Spleen (tissue), 13 donors: ENCODE measurements at regions of chr19 and their contacts with region 1.

Region 1: DNA sequence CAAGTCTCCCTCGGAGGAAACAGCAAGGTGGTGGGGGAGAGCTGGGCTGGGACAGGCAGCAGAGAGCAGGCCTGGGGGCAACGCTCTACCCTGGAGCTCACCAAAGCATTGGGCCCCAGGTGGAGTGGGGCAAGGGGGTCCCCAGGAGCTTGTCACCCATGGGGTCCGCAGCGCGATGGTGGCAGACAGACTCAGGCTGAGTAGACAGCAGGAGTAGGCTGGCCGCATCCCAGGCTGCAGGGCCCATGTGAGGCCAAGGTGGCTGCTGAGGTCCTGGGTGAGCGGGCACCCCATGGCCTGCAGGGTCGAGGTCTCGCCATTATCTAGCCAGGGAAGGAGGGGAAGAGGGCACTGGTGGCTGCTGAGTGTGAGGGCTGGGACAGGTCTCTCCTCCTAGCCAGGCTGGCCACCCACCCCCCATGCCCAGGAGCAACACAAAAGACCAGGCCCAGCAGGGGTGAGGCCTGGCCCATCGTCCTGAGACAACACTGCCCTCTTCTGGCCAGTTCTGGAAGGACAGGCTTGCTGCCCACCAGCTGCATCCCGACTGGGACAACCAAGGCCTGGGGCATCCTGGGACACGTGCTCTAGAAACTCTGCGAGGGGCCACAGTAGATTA is 33.1 kb downstream of the CEBPG start:
- DNase-seq: peak; percentile 91
- H3K4me3 ChIP-seq: no peak overlapping the region
- H3K27ac ChIP-seq: no peak overlapping the region
- H3K4me1 ChIP-seq: peaks cover 0 to 6% (median 0%) of the 10 kb centered on the region in 6 donors
- H3K27me3 ChIP-seq: no peaks in the 10 kb centered on the region
- CTCF ChIP-seq: peak; percentile 92 to 99 (median 97)
- POLR2A ChIP-seq: no peak

Region 2: DNA sequence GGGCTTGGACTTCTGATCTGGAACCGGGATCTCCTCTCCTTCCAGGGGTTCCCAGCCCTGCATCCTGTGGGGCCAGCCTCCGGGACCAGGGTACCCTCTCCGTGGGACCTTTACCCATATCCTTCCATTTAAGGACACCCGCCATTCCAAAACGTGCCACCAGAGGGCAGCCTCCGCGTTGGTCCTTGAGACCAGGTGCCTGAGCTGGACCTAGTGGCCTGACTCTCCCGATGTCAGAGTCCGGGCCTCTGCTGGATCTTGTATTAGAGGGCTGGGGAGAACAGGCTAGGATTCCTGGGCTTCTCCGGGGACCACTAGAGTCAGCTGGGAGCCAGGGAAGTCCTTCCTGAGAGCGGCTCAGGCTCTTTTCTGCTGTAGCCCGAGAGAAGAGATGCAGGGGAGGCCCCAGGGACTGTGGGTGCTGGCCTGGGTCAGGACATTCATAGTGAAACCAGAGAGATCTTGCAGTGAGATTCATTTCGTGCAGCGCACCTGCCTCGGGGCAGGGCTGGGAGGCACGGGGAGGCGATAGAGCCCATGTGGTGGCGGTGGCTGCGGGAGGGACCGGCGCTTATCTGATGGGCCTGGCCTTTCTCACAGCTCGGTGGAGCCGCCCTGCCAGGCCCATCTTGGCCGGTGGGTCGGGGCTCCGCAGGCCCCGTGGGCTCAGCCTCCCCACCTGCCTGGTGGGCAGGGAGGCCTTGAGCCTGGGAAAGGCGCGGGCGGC is 171.2 kb before region 1 on chr19:
- intact Hi-C with region 1: loop called (anchors 2 kb)
- DNase-seq: peak; percentile 93
- H3K4me3 ChIP-seq: peak overlapping the region in 4 of 8 donors; percentile 1 to 50 (median 15)
- H3K27ac ChIP-seq: no peak overlapping the region
- H3K4me1 ChIP-seq: peaks cover 0 to 20% (median 10%) of the 10 kb centered on the region in 6 donors
- H3K27me3 ChIP-seq: peaks cover 0 to 35% (median 6%) of the 10 kb centered on the region in 7 donors
- CTCF ChIP-seq: peak; percentile 78 to 95 (median 90)
- POLR2A ChIP-seq: no peak